ENCODE measurements at regions of chr1 and their contacts with region 1.

Region 1: GRCh38 chr1:20430355-20431175 is 55.4 kb downstream of the CAMK2N1 start:
- DNase-seq: peak; percentile 8
- H3K4me3 Mint-ChIP-seq: no peak overlapping the region
- H3K27ac Mint-ChIP-seq: no peak overlapping the region
- H3K4me1 Mint-ChIP-seq: peaks cover 8% of the 10 kb centered on the region
- H3K27me3 Mint-ChIP-seq: peaks cover 8% of the 10 kb centered on the region

Region 2: GRCh38 chr1:20361806-20362640 is 68.5 kb before region 1 on chr1:
- intact Hi-C with region 1: loop called (anchors 1 kb)
- DNase-seq: no peak
- H3K4me3 Mint-ChIP-seq: no peak overlapping the region
- H3K27ac Mint-ChIP-seq: no peak overlapping the region
- H3K4me1 Mint-ChIP-seq: peaks cover 11% of the 10 kb centered on the region
- H3K27me3 Mint-ChIP-seq: peaks cover 47% of the 10 kb centered on the region